CD8-positive, alpha-beta T cell (primary cell): ENCODE measurements at regions of chr3 and their contacts with region 1.

Region 1: DNA sequence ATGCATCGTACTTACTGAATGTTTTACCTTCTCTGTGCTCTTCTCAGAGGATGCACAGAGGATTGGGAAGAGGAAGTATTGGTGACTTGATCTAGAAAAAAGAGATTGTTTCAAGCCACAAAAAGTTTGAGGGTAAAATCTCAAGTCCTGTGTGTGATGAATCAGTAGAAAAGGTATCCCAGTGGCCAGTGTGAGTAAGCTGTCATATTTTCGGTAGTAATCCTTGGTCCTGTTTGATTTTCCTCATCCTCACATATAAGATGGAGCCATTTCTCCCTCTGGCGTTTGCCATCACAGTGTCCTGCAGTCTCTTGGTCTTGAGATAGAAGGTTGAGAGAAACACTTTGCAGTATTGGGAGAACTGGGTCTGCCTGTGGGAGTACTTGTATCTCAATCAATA is 166.8 kb downstream of the LPP start:
- DNase-seq: no peak
- ATAC-seq: no peak
- H3K4me3 ChIP-seq: no peak overlapping the region
- H3K4me3 Mint-ChIP-seq: no peak overlapping the region
- H3K27ac ChIP-seq: no peak overlapping the region
- H3K27ac Mint-ChIP-seq: no peak overlapping the region
- H3K4me1 ChIP-seq: peaks cover 21% of the 10 kb centered on the region
- H3K4me1 Mint-ChIP-seq: peaks cover 48% of the 10 kb centered on the region
- H3K27me3 ChIP-seq: no peaks in the 10 kb centered on the region
- H3K27me3 Mint-ChIP-seq: no peaks in the 10 kb centered on the region
- CTCF ChIP-seq: no peak

Region 2: DNA sequence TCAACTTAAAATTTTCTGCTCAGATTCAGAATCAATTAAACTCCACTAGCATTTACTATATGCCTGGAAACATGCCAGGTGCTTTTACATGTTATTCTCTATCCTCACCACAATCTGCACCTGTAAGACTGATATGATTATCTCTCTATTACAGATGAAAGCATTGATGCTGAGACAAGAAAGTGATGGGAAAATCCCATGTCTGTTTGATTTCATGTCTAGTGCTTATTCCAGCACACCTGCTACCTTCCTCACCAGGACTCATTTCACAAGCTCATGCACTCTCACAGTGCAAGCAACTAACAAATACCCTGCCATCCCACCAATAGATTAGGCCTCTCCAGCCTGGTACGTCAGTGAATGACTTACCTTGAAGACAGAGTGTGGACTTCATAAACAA is 550.5 kb before region 1 on chr3:
- CTCF ChIA-PET with region 1: no interaction called
- POLR2A ChIA-PET with region 1: no interaction called
- intact Hi-C with region 1: no loop called
- DNase-seq: peak in 2 of 9 experiments; percentile 62 to 75
- ATAC-seq: peak; percentile 56
- H3K4me3 ChIP-seq: no peak overlapping the region
- H3K4me3 Mint-ChIP-seq: no peak overlapping the region
- H3K27ac ChIP-seq: no peak overlapping the region
- H3K27ac Mint-ChIP-seq: peak overlapping the region; percentile 1
- H3K4me1 ChIP-seq: peaks cover 10% of the 10 kb centered on the region
- H3K4me1 Mint-ChIP-seq: peaks cover 12% of the 10 kb centered on the region
- H3K27me3 ChIP-seq: no peaks in the 10 kb centered on the region
- H3K27me3 Mint-ChIP-seq: no peaks in the 10 kb centered on the region
- CTCF ChIP-seq: no peak

Region 3: GRCh38 chr3:188339410-188340295 is 18.9 kb after region 1 on chr3:
- CTCF ChIA-PET with region 1: no interaction called
- POLR2A ChIA-PET with region 1: interaction called, 4 read pairs
- intact Hi-C with region 1: loop called in 1 of 2 experiments (anchors 2 kb)
- DNase-seq: peak in 4 of 9 experiments; percentile 20 to 80 (median 60)
- ATAC-seq: peak; percentile 84
- H3K4me3 ChIP-seq: peak overlapping the region in 1 of 2 experiments; percentile 17
- H3K4me3 Mint-ChIP-seq: peak overlapping the region; percentile 38
- H3K27ac ChIP-seq: peak overlapping the region in 1 of 2 experiments; percentile 52
- H3K27ac Mint-ChIP-seq: peak overlapping the region; percentile 80
- H3K4me1 ChIP-seq: no peaks in the 10 kb centered on the region
- H3K4me1 Mint-ChIP-seq: peaks cover 34% of the 10 kb centered on the region
- H3K27me3 ChIP-seq: no peaks in the 10 kb centered on the region
- H3K27me3 Mint-ChIP-seq: no peaks in the 10 kb centered on the region
- CTCF ChIP-seq: no peak

Region 4: GRCh38 chr3:188439080-188439479 is 118.3 kb after region 1 on chr3:
- CTCF ChIA-PET with region 1: no interaction called
- POLR2A ChIA-PET with region 1: no interaction called
- intact Hi-C with region 1: loop called in 1 of 2 experiments (anchors 5 kb)
- DNase-seq: peak in 6 of 9 experiments; percentile 20 to 78 (median 34)
- ATAC-seq: peak; percentile 88
- H3K4me3 ChIP-seq: no peak overlapping the region
- H3K4me3 Mint-ChIP-seq: peak overlapping the region; percentile 48
- H3K27ac ChIP-seq: peak overlapping the region in 1 of 2 experiments; percentile 78
- H3K27ac Mint-ChIP-seq: peak overlapping the region; percentile 41
- H3K4me1 ChIP-seq: peaks cover 17% of the 10 kb centered on the region
- H3K4me1 Mint-ChIP-seq: peaks cover 44% of the 10 kb centered on the region
- H3K27me3 ChIP-seq: no peaks in the 10 kb centered on the region
- H3K27me3 Mint-ChIP-seq: no peaks in the 10 kb centered on the region
- CTCF ChIP-seq: no peak

Region 5: GRCh38 chr3:188624384-188624783 is 303.6 kb after region 1 on chr3:
- CTCF ChIA-PET with region 1: no interaction called
- POLR2A ChIA-PET with region 1: no interaction called
- intact Hi-C with region 1: no loop called
- DNase-seq: no peak
- ATAC-seq: no peak
- H3K4me3 ChIP-seq: no peak overlapping the region
- H3K4me3 Mint-ChIP-seq: no peak overlapping the region
- H3K27ac ChIP-seq: no peak overlapping the region
- H3K27ac Mint-ChIP-seq: no peak overlapping the region
- H3K4me1 ChIP-seq: no peaks in the 10 kb centered on the region
- H3K4me1 Mint-ChIP-seq: no peaks in the 10 kb centered on the region
- H3K27me3 ChIP-seq: no peaks in the 10 kb centered on the region
- H3K27me3 Mint-ChIP-seq: no peaks in the 10 kb centered on the region
- CTCF ChIP-seq: no peak